ENCODE measurements at regions of chr3 and their contacts with region 1.

Region 1: GRCh38 chr3:132641837-132642538 is 17.6 kb downstream of the ACAD11 start:
- DNase-seq: peak; percentile 22
- ATAC-seq: peak; percentile 70
- H3K4me3 ChIP-seq: no peak overlapping the region
- H3K27ac ChIP-seq: no peak overlapping the region
- H3K4me1 ChIP-seq: no peaks in the 10 kb centered on the region
- H3K27me3 ChIP-seq: no peaks in the 10 kb centered on the region
- CTCF ChIP-seq: peak; percentile 56 to 71 (median 67)
- POLR2A ChIP-seq: no peak
- RAD21 ChIP-seq: peak; percentile 76

Region 2: GRCh38 chr3:132253262-132253878 is 388.6 kb before region 1 on chr3:
- CTCF ChIA-PET with region 1: interaction called, 7 read pairs
- POLR2A ChIA-PET with region 1: no interaction called
- RAD21 ChIA-PET with region 1: no interaction called
- intact Hi-C with region 1: loop called (anchors 10 kb)
- DNase-seq: peak; percentile 56
- ATAC-seq: peak; percentile 87
- H3K4me3 ChIP-seq: no peak overlapping the region
- H3K27ac ChIP-seq: no peak overlapping the region
- H3K4me1 ChIP-seq: no peaks in the 10 kb centered on the region
- H3K27me3 ChIP-seq: no peaks in the 10 kb centered on the region
- CTCF ChIP-seq: peak; percentile 69 to 74 (median 73); a peak in 5 of 6 replicates
- POLR2A ChIP-seq: no peak
- RAD21 ChIP-seq: peak; percentile 70

Region 3: DNA sequence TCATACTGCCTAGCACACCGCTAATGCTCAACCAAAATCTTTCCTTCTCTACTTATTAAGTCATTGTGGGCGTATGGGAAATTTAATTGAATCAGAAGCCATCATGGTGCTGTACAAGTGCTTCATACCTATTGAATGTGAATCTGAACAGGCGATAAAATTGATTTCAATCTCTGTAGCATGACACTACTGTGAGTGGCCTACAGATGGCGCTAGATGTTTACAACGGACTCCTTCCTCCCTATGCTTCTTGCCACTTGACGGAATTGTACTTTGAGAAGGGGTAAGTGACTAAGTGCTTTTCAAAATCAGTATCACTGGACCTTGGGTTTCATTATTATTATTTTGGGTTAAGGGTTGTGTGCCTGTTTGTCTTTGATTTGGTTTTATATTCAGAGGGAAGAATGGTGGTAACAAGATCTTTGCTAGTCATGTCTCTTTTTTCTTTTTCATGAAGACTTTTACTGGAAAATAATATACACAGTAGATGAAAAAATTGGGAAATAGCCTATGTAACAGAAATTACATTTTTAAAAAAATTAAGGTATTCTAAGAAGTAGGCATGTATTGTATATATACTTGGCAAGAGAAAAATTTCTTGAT is 289.3 kb before region 1 on chr3:
- CTCF ChIA-PET with region 1: interaction called, 5 read pairs
- POLR2A ChIA-PET with region 1: no interaction called
- RAD21 ChIA-PET with region 1: no interaction called
- intact Hi-C with region 1: loop called (anchors 5 kb)
- DNase-seq: peak; percentile 61
- ATAC-seq: peak; percentile 97
- H3K4me3 ChIP-seq: no peak overlapping the region
- H3K27ac ChIP-seq: no peak overlapping the region
- H3K4me1 ChIP-seq: no peaks in the 10 kb centered on the region
- H3K27me3 ChIP-seq: no peaks in the 10 kb centered on the region
- CTCF ChIP-seq: peak; percentile 72 to 94 (median 85)
- POLR2A ChIP-seq: no peak
- RAD21 ChIP-seq: peak; percentile 86

Region 4: GRCh38 chr3:132432639-132433038 is 209.3 kb before region 1 on chr3:
- CTCF ChIA-PET with region 1: no interaction called
- POLR2A ChIA-PET with region 1: no interaction called
- RAD21 ChIA-PET with region 1: no interaction called
- intact Hi-C with region 1: loop called (anchors 10 kb)
- DNase-seq: peak; percentile 34
- ATAC-seq: peak; percentile 72
- H3K4me3 ChIP-seq: no peak overlapping the region
- H3K27ac ChIP-seq: no peak overlapping the region; the same call in 1 of the 2 replicates
- H3K4me1 ChIP-seq: peaks cover 8 to 18% of the 10 kb centered on the region in 2 experiments; a peak in 3 of 4 replicates
- H3K27me3 ChIP-seq: no peaks in the 10 kb centered on the region
- CTCF ChIP-seq: no peak
- POLR2A ChIP-seq: no peak
- RAD21 ChIP-seq: no peak

Region 5: DNA sequence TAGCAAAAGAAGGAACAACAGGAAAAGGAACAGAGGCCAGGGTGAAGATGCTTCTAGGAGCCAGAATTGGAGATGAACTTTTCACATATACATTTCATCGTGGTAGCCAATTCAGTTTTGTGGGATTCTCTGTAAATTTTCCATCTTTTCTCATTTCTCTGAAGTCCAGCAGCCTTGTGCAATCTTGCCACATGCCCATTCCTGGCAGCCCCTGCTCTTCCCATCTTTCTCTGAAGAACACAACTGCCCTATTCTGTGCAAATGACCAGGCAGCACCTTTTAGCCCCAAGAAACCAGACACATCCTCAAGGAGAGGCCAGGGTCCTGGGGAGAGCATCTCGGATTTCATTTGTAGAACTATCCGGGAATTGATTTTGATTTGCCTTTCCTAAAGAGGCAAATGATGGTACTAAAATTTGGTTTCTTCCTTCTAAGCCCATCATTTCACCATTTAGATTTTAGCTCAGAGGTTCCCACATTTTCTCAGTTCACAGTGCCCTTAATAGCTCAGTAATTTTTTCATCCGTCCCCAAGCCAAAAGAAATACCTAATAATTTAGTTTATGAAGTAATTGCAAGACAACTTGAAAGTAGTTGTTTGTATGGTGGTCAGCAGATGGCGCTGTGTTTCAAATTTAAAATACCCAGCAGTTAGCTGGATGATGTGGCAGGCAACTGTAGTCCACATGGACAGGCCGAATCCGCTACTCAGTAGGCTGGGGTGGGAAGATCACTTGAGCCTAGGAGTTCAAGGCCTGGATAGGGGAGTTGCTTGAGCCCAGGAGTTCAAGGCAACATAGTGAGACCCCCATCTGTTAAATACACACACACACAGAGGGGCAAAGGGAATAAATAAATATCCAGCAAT is 106.2 kb before region 1 on chr3:
- CTCF ChIA-PET with region 1: interaction called, 36 read pairs
- POLR2A ChIA-PET with region 1: no interaction called
- RAD21 ChIA-PET with region 1: no interaction called
- intact Hi-C with region 1: loop called (anchors 1 kb)
- DNase-seq: peak; percentile 46
- ATAC-seq: peak; percentile 89
- H3K4me3 ChIP-seq: no peak overlapping the region
- H3K27ac ChIP-seq: no peak overlapping the region
- H3K4me1 ChIP-seq: no peaks in the 10 kb centered on the region
- H3K27me3 ChIP-seq: no peaks in the 10 kb centered on the region
- CTCF ChIP-seq: peak; percentile 50 to 69 (median 55); a peak in 5 of 6 replicates
- POLR2A ChIP-seq: no peak
- RAD21 ChIP-seq: peak; percentile 66

Region 6: DNA sequence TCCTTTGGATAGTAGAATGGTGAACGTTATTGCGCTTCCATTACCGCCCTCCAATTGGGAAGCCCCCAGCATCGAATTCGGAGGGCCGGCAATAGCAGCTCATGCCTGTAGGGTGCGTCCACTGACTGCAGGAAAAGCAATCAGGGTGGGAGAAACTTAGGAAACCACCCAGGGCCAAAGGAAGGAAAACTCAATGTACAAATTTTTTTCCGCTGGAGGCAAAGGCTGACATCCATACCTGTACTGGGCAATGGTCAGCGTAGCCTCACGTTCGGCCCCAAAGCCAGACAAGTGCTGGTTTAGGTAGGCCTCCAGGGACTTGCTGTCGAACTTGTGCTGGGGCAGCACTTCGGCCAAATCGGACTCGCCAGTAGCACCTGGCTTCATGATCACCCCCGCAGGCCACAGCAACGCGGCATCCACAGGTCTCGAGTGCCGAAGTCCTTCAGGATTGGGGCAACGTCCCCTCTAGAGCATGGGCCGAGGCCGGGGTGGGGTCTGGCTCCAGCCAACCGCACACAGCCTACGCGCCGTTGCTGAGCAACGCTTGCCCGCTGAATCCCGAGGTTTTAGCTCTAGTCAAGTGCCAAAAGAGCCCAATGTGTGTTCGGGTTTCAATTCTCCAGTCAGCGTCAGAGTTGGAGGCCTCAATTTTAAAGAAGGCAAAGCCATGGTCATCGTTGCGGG is 17.5 kb after region 1 on chr3 and contains the start of gene ACAD11:
- CTCF ChIA-PET with region 1: interaction called, 11 read pairs
- POLR2A ChIA-PET with region 1: interaction called, 3 read pairs
- RAD21 ChIA-PET with region 1: no interaction called
- intact Hi-C with region 1: no loop called
- DNase-seq: peak; percentile 59
- ATAC-seq: peak; percentile 85
- H3K4me3 ChIP-seq: peak within 1 kb of the TSS; percentile 72 to 87
- H3K27ac ChIP-seq: peak within 1 kb of the TSS; percentile 89
- H3K4me1 ChIP-seq: peaks cover 0 to 16% of the 10 kb centered on the region in 2 experiments; a peak in 2 of 4 replicates
- H3K27me3 ChIP-seq: no peaks in the 10 kb centered on the region
- CTCF ChIP-seq: peak in 2 of 3 experiments; percentile 66 to 71; a peak in 5 of 6 replicates
- POLR2A ChIP-seq: peak; percentile 17
- RAD21 ChIP-seq: peak; percentile 57
- total RNA-seq, gene ACAD11: 12.6 TPM

Measured in HCT116 (cell line).